Heart left ventricle (tissue), 16 donors: ENCODE measurements at regions of chr7 and their contacts with region 1.

Region 1: DNA sequence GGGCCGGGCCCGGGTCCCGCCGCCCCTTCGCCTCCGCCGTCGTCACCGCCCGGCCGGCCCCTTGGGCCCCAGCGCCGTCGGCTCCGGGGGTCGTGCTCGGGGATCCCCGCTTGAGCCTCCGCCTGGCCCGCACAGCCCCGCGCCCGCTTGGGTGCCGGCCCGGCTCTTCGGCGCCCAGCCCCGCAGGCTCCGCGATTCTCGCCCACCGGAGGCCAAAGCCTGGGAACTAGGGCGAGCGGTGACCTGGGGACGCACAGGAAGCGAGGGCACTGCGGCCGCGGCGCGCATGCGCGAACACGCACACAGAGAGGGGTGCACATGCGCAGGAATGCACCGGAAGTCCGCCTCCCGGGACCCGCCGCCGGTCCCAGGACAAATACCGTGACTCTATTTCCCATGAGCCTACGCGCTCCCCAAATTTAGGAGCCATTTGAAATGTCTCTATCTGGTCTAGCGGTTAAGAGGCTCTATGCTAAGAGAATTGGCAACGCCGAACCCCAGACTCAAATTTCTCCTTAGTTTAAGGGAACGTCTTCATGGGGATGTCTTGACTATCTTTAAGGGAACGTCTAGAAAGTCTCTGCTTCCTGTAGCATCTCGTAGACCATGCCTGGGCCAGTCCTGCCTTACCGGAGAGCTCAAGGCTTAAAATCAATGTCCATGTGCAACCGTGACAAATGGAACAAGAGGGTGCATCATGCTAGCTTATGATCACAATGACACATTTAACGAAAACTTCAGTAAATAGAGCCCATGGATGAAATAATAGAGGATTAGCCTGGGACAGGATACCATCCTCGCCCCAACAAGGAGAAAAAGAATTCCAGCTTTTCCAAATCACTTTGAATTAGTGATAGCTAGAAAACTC is at the start of gene ZNF12:
- DNase-seq: peak; percentile 97 to 99 (median 98)
- ATAC-seq: peak; percentile 98 to 100 (median 99)
- H3K4me3 ChIP-seq: peak within 1 kb of the TSS; percentile 56 to 99 (median 88)
- H3K27ac ChIP-seq: peak within 1 kb of the TSS; percentile 82 to 98 (median 93)
- H3K4me1 ChIP-seq: peaks cover 0 to 40% (median 33%) of the 10 kb centered on the region in 12 donors
- H3K27me3 ChIP-seq: no peaks in the 10 kb centered on the region
- CTCF ChIP-seq: no peak
- POLR2A ChIP-seq: peak in 1 of 2 donors; percentile 76
- total RNA-seq, gene ZNF12: 11.4 to 20.1 (median 15.0) TPM

Region 2: GRCh38 chr7:6577365-6578113 is 129.4 kb before region 1 on chr7 and contains the start of gene ZDHHC4:
- intact Hi-C with region 1: loop called in 1 of 10 experiments (anchors 5 kb)
- DNase-seq: peak; percentile 91 to 96 (median 94)
- ATAC-seq: peak; percentile 97 to 99 (median 98)
- H3K4me3 ChIP-seq: peak within 1 kb of the TSS; percentile 5 to 93 (median 72)
- H3K27ac ChIP-seq: peak within 1 kb of the TSS; percentile 87 to 98 (median 92)
- H3K4me1 ChIP-seq: peaks cover 0 to 16% (median 5%) of the 10 kb centered on the region in 12 donors
- H3K27me3 ChIP-seq: no peaks in the 10 kb centered on the region
- CTCF ChIP-seq: peak in 1 of 12 donors; percentile 18
- POLR2A ChIP-seq: peak; percentile 61 to 88
- total RNA-seq, gene ZDHHC4: 26.2 to 45.5 (median 37.8) TPM

Region 3: GRCh38 chr7:6589829-6590644 is 116.9 kb before region 1 on chr7 and contains the start of gene INTS15:
- intact Hi-C with region 1: loop called in 1 of 10 experiments (anchors 10 kb)
- DNase-seq: peak; percentile 74 to 88 (median 84)
- ATAC-seq: peak; percentile 71 to 96 (median 94)
- H3K4me3 ChIP-seq: peak within 1 kb of the TSS; percentile 68 to 96 (median 92)
- H3K27ac ChIP-seq: peak within 1 kb of the TSS; percentile 65 to 95 (median 91)
- H3K4me1 ChIP-seq: peaks cover 0 to 25% (median 15%) of the 10 kb centered on the region in 12 donors
- H3K27me3 ChIP-seq: no peaks in the 10 kb centered on the region
- CTCF ChIP-seq: peak; percentile 38 to 99 (median 81)
- POLR2A ChIP-seq: peak in 1 of 2 donors; percentile 57
- total RNA-seq, gene INTS15: 11.7 to 22.7 (median 15.3) TPM

Region 4: DNA sequence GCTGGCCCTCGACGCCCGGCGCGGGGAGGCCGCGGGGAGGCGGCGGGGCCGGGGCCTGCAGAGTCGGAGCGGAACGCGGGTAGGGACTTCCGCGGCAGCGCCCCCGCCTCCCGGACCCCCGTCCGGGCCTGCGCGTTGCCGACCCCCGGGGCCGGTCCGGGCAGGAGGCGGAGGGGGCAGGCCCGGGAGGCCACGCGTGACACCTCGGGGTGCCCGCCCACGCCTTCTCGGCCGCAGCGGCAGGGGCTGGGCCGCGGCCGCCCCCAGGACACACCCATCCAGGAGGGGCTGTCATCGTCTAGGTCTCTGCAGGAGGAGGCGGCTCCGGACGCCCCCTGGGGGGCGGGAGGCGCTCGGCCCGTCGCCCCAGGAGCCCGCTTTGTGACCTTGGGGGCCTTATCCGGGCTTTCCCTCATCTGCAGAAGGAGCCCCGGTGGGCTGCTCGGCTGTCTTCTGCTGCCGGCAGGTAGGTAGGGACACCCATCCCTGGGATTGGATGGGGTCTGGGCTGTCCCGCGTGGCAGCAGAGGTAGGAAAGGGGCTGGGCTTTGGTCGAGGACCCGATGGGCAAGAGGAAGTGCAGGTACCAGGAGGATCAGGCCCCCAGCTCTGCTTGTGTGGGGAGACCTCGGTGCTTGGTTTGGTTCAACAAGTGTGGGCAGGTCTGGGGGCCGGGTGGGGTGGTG is 69.2 kb before region 1 on chr7:
- intact Hi-C with region 1: loop called in 1 of 10 experiments (anchors 5 kb)
- DNase-seq: peak in 3 of 5 donors; percentile 30 to 44 (median 37)
- ATAC-seq: peak; percentile 10 to 56 (median 42)
- H3K4me3 ChIP-seq: peak overlapping the region; percentile 66 to 99 (median 92)
- H3K27ac ChIP-seq: peak overlapping the region in 11 of 12 donors; percentile 41 to 76 (median 63)
- H3K4me1 ChIP-seq: peaks cover 0 to 31% (median 17%) of the 10 kb centered on the region in 12 donors
- H3K27me3 ChIP-seq: no peaks in the 10 kb centered on the region
- CTCF ChIP-seq: peak in 9 of 12 donors; percentile 8 to 42 (median 24)
- POLR2A ChIP-seq: no peak

Region 5: GRCh38 chr7:6729492-6730342 is 22.8 kb after region 1 on chr7:
- intact Hi-C with region 1: loop called in 4 of 10 experiments (anchors 1 to 2 kb)
- DNase-seq: peak; percentile 94 to 98 (median 97)
- ATAC-seq: peak; percentile 100
- H3K4me3 ChIP-seq: peak overlapping the region; percentile 64 to 95 (median 84)
- H3K27ac ChIP-seq: peak overlapping the region; percentile 59 to 93 (median 88)
- H3K4me1 ChIP-seq: peaks cover 0 to 20% (median 9%) of the 10 kb centered on the region in 12 donors
- H3K27me3 ChIP-seq: no peaks in the 10 kb centered on the region
- CTCF ChIP-seq: peak in 1 of 12 donors; percentile 21
- POLR2A ChIP-seq: peak; percentile 0 to 44